ENCODE measurements at regions of chrX and their contacts with region 1.

Region 1: GRCh38 chrX:86195343-86195742 is 47.1 kb downstream of the DACH2 start:
- DNase-seq: no peak

Region 2: GRCh38 chrX:85941275-85941674 is 254.1 kb before region 1 on chrX:
- intact Hi-C with region 1: no loop called
- DNase-seq: no peak

Region 3: GRCh38 chrX:86178906-86179305 is 16.4 kb before region 1 on chrX:
- intact Hi-C with region 1: no loop called
- DNase-seq: no peak

Region 4: GRCh38 chrX:87388381-87388780 is 1193.0 kb after region 1 on chrX:
- intact Hi-C with region 1: loop called in 1 of 2 experiments (anchors 5 kb)
- DNase-seq: no peak

Measured in posterior vena cava (tissue), 2 donors.